PC-3 (cell line): ENCODE measurements at regions of chr3 and their contacts with region 1.

Region 1: GRCh38 chr3:189049438-189050236 is 122.1 kb upstream of the TPRG1 start:
- DNase-seq: peak; percentile 21
- ATAC-seq: no peak
- H3K4me3 ChIP-seq: no peak overlapping the region
- H3K27ac ChIP-seq: no peak overlapping the region
- H3K4me1 ChIP-seq: no peaks in the 10 kb centered on the region
- H3K27me3 ChIP-seq: no peaks in the 10 kb centered on the region
- CTCF ChIP-seq: peak; percentile 52

Region 2: DNA sequence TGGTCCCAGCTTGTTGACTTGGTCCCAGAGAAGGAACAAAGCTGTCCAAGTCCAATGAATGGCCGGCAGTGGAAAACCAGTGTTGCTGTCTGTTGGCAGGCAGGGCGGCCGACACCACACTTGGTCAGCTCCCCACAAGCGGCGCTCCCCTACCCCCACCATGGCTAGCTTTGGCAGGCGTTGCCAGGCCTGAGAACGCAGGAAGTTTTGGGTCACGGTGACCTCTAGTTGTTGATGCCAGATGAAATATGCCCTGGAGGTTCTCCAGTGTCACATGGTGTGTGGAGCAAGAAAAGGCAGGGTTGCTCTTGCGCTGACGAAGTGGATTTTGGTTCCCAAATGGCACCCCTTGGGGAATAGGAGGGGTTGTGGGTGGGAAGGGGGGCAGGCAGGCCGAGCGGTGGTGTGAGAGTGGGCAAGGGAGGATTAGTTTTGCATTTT is 49.4 kb after region 1 on chr3:
- CTCF ChIA-PET with region 1: no interaction called
- POLR2A ChIA-PET with region 1: no interaction called
- intact Hi-C with region 1: no loop called
- DNase-seq: no peak
- ATAC-seq: no peak
- H3K4me3 ChIP-seq: no peak overlapping the region
- H3K27ac ChIP-seq: no peak overlapping the region
- H3K4me1 ChIP-seq: no peaks in the 10 kb centered on the region
- H3K27me3 ChIP-seq: no peaks in the 10 kb centered on the region
- CTCF ChIP-seq: no peak

Region 3: DNA sequence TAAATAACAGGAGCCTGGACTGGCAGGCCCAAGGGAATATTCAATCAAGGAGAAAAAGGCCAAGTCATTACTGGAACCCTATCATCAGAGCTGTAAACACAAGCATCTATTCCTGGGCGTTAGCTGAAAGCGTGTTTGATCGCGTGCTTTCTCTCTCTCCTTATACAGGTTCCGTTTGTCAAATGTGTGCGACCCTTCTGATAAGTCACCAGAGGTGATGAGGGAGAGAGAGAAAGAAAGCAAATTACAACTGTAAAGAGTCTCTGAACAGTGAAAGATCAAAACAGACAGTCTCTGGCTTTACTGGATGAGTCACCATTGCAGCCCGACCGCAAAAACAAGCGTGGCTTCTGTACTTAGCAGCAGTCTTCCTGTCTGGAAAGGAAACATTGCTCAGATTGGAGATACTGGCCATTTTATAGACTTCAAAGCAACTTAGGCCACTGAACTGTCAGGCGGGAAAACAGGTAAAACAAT is 82.6 kb after region 1 on chr3:
- CTCF ChIA-PET with region 1: no interaction called
- POLR2A ChIA-PET with region 1: no interaction called
- intact Hi-C with region 1: loop called (anchors 5 kb)
- DNase-seq: peak; percentile 92
- ATAC-seq: peak; percentile 100
- H3K4me3 ChIP-seq: peak overlapping the region; percentile 26; the same call in 1 of the 2 replicates
- H3K27ac ChIP-seq: peak overlapping the region; percentile 11; the same call in 1 of the 2 replicates
- H3K4me1 ChIP-seq: peaks cover 15% of the 10 kb centered on the region
- H3K27me3 ChIP-seq: no peaks in the 10 kb centered on the region
- CTCF ChIP-seq: no peak